Endothelial cell of umbilical vein (primary cell): ENCODE measurements at regions of chr7 and their contacts with region 1.

Region 1: GRCh38 chr7:101688183-101688831 is 59.2 kb upstream of the MYL10 start:
- DNase-seq: peak; percentile 58
- H3K4me3 ChIP-seq: peak overlapping the region in 2 of 3 experiments; percentile 8 to 17
- H3K27ac ChIP-seq: no peak overlapping the region
- H3K4me1 ChIP-seq: peaks cover 6% of the 10 kb centered on the region
- H3K27me3 ChIP-seq: no peaks in the 10 kb centered on the region
- CTCF ChIP-seq: peak; percentile 90 to 97
- POLR2A ChIP-seq: no peak

Region 2: DNA sequence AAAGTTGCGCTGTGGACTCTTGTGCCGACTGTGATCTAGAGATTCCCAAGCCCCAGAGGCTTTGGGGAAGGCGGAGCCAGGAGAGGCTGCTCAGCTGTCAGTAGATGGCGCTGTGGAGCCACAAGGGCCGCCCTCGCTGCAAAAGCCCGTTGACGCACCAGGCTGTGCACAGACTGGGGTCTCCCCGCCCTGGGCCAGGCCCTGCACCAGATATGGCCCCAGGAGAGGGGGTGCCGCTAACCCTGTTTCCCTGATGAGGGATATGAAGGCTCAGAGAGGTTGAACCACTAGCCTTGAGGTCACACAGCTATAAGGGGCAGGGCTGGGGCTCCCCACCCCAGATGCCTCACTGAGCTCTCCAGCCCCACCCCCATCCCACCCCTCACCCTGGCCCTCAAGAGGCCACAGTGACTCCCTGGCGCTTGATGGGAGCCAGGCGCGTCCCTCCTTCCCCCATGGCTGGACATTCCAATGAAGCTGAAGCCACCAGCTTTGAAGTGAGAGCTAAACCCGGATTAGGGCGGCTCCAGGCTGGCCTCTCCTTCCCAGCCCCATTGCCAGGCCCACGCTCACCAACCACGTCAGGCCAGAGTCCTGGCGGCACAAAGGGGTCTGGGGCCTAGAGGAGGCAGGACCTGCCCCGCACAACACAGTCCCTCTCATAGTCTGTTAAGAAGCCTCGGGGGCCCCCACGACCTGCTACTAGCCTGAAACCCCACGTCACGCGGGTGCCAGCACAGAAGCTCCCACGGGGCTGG is 85.6 kb before region 1 on chr7:
- CTCF ChIA-PET with region 1: interaction called, 11 read pairs
- POLR2A ChIA-PET with region 1: no interaction called
- dilution Hi-C with region 1: no loop called
- intact Hi-C with region 1: loop called (anchors 5 kb)
- DNase-seq: peak; percentile 64
- H3K4me3 ChIP-seq: no peak overlapping the region
- H3K27ac ChIP-seq: no peak overlapping the region
- H3K4me1 ChIP-seq: no peaks in the 10 kb centered on the region
- H3K27me3 ChIP-seq: no peaks in the 10 kb centered on the region
- CTCF ChIP-seq: peak; percentile 87 to 99
- POLR2A ChIP-seq: no peak

Region 3: DNA sequence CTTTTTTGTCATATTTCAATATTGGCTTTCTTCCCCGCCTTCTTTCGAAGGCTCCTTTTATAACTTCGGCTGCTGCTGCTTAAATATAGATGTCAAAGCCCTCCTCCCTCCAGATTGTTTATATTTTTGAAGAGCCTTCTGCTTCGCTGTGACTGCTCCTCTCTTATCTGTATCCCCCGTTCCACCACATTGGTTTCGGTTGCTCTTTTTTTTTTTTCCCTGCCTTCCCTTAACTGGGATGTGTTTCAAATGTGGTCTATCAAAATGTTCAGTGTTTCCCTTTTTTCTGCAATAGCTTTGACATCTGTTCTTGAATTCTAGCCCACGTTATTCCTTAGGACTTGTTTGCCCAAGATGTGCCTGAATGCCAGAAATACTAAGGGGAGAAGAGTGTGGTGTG is 225.5 kb after region 1 on chr7:
- CTCF ChIA-PET with region 1: no interaction called
- POLR2A ChIA-PET with region 1: no interaction called
- dilution Hi-C with region 1: no loop called
- intact Hi-C with region 1: no loop called
- DNase-seq: no peak
- H3K4me3 ChIP-seq: no peak overlapping the region
- H3K27ac ChIP-seq: no peak overlapping the region
- H3K4me1 ChIP-seq: no peaks in the 10 kb centered on the region
- H3K27me3 ChIP-seq: no peaks in the 10 kb centered on the region
- CTCF ChIP-seq: no peak
- POLR2A ChIP-seq: no peak

Region 4: DNA sequence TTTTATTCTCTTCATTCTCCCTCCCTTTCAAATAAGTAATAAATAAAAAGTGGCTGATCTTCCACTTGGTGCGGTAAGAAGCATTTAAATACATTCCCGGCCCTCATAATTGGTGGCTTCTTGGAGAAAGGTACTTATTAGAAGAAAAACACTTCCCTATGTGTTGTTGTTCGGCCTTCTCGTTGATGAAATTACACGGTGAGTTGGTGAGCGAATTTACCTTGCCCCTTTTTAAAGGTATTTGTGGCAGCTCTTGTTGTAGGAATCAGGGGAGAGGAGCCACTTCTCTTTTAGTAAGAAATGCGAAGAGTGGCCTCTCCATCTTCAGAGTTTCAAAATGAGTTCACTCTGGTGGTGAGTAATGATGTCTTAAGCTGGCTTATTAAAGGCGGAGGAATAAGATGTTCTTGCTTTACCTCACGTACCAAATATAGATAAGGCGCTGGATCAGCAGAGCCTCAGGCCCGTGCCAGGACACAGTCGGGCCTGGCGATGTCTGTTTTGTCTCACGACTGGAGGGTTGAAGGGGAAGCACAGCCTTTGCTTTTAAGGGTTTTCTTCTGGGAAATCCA is 265.0 kb after region 1 on chr7:
- CTCF ChIA-PET with region 1: no interaction called
- POLR2A ChIA-PET with region 1: no interaction called
- dilution Hi-C with region 1: no loop called
- intact Hi-C with region 1: loop called (anchors 10 kb)
- DNase-seq: no peak
- H3K4me3 ChIP-seq: peak overlapping the region in 1 of 3 experiments; percentile 43
- H3K27ac ChIP-seq: peak overlapping the region; percentile 88
- H3K4me1 ChIP-seq: peaks cover 28% of the 10 kb centered on the region
- H3K27me3 ChIP-seq: no peaks in the 10 kb centered on the region
- CTCF ChIP-seq: no peak
- POLR2A ChIP-seq: no peak

Region 5: GRCh38 chr7:102272075-102272917 is 584.0 kb after region 1 on chr7:
- CTCF ChIA-PET with region 1: interaction called, 4 read pairs
- POLR2A ChIA-PET with region 1: no interaction called
- dilution Hi-C with region 1: no loop called
- intact Hi-C with region 1: loop called (anchors 1 kb)
- DNase-seq: peak; percentile 56
- H3K4me3 ChIP-seq: no peak overlapping the region
- H3K27ac ChIP-seq: no peak overlapping the region
- H3K4me1 ChIP-seq: no peaks in the 10 kb centered on the region
- H3K27me3 ChIP-seq: no peaks in the 10 kb centered on the region
- CTCF ChIP-seq: peak; percentile 89 to 92
- POLR2A ChIP-seq: no peak